GM12878 (cell line): ENCODE measurements at regions of chr7 and their contacts with region 1.

Region 1: GRCh38 chr7:156840134-156840533 is 52.8 kb downstream of the LMBR1 start:
- DNase-seq: no peak
- ATAC-seq: no peak
- H3K4me3 ChIP-seq: no peak overlapping the region
- H3K27ac ChIP-seq: no peak overlapping the region
- H3K4me1 ChIP-seq: no peaks in the 10 kb centered on the region
- H3K27me3 ChIP-seq: no peaks in the 10 kb centered on the region
- CTCF ChIP-seq: no peak
- EP300 ChIP-seq: no peak
- POLR2A ChIP-seq: no peak
- RAD21 ChIP-seq: no peak

Region 2: DNA sequence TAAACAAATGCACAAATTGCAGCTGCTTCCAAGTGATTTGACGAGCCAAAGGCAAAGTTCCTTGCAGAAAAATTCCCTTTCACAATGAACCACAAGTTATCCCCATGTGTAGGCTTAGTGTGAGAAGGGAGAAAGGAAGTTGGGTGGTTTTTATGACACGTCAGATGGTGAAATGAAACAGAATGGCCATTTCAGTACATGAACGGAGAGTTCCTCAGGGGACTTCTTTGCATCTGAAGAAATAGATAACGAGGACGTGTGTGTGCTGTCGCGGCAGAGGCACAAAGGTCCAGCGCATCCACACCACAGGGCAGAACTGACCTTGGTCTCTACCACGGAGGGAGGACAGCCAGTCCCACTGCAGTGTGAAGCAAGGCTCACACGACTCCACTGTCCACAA is 1973.1 kb before region 1 on chr7:
- CTCF ChIA-PET with region 1: no interaction called
- POLR2A ChIA-PET with region 1: interaction called, 10 read pairs
- RAD21 ChIA-PET with region 1: no interaction called
- SMC1A ChIA-PET with region 1: no interaction called
- in situ Hi-C with region 1: no loop called
- intact Hi-C with region 1: no loop called
- DNase-seq: peak; percentile 59
- ATAC-seq: peak; percentile 80
- H3K4me3 ChIP-seq: no peak overlapping the region
- H3K27ac ChIP-seq: no peak overlapping the region
- H3K4me1 ChIP-seq: peaks cover 8% of the 10 kb centered on the region
- H3K27me3 ChIP-seq: no peaks in the 10 kb centered on the region
- CTCF ChIP-seq: no peak
- EP300 ChIP-seq: peak; percentile 58 to 77; a peak in 2 of 4 replicates
- POLR2A ChIP-seq: no peak
- RAD21 ChIP-seq: no peak

Region 3: GRCh38 chr7:156703773-156704482 is 136.2 kb before region 1 on chr7:
- CTCF ChIA-PET with region 1: no interaction called
- POLR2A ChIA-PET with region 1: no interaction called
- RAD21 ChIA-PET with region 1: no interaction called
- SMC1A ChIA-PET with region 1: no interaction called
- in situ Hi-C with region 1: no loop called
- intact Hi-C with region 1: no loop called
- DNase-seq: peak; percentile 39
- ATAC-seq: peak; percentile 84
- H3K4me3 ChIP-seq: no peak overlapping the region
- H3K27ac ChIP-seq: no peak overlapping the region; the same call in 1 of the 2 replicates
- H3K4me1 ChIP-seq: peaks cover 15% of the 10 kb centered on the region
- H3K27me3 ChIP-seq: no peaks in the 10 kb centered on the region
- CTCF ChIP-seq: no peak
- EP300 ChIP-seq: no peak
- POLR2A ChIP-seq: no peak
- RAD21 ChIP-seq: no peak

Region 4: DNA sequence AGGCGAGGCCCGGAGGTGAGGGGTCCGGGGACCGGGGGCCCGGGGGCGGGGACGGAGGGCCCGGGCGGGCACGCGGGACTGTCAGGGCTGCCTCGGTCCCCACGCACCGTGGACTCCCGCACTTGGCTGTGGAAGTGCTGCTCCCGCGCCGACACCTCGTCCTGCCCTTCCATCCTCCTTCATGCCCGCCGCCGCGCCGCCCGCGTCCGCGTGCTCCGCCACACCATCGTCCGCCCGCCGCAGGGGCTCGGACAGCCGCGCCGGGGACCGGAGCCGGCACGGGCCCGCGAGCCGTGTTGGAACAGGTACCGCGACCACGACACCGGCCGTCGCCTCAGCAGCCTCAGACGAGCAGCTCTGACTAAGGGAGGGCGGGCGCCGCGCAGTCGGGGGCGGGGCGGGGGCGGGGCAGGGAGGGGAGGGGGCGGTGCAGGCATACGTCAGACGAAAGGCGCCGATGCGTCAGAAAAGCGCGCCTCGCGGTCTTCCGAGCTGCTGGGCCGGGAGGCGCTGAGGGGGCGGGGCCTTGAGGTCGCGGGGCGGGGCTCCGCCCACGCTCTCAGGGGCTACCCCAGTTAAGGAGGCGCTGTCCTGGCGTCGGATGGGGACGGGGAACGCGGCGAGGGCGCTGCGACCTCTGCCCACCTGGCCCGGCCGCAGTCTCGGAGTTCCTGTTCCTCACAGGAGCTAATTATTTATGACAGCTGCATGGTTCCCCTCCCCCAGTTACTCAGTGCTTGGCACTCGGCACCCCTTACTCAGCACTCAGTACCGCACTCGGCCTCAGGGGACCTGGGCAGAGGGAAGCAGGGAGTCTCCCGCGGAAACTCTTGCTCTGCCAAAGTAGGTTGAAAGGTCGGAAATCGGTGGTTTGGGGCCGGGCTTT is 52.9 kb after region 1 on chr7 and contains the start of gene LMBR1:
- CTCF ChIA-PET with region 1: no interaction called
- POLR2A ChIA-PET with region 1: no interaction called
- RAD21 ChIA-PET with region 1: no interaction called
- SMC1A ChIA-PET with region 1: no interaction called
- in situ Hi-C with region 1: no loop called
- intact Hi-C with region 1: no loop called
- DNase-seq: peak; percentile 80
- ATAC-seq: peak; percentile 87
- H3K4me3 ChIP-seq: peak within 1 kb of the TSS; percentile 86
- H3K27ac ChIP-seq: peak within 1 kb of the TSS; percentile 71
- H3K4me1 ChIP-seq: peaks cover 25% of the 10 kb centered on the region
- H3K27me3 ChIP-seq: no peaks in the 10 kb centered on the region
- CTCF ChIP-seq: peak in 2 of 3 experiments; percentile 47 to 59; a peak in 4 of 6 replicates
- EP300 ChIP-seq: no peak; a peak in 1 of 4 replicates
- POLR2A ChIP-seq: peak; percentile 96
- RAD21 ChIP-seq: 0 out of 2 replicates have a peak, but pooled peaks have one; percentile 12
- polyA plus RNA-seq, gene LMBR1: 4.0 to 7.5 TPM